ENCODE measurements at regions of chr17 and their contacts with region 1.

Region 1: DNA sequence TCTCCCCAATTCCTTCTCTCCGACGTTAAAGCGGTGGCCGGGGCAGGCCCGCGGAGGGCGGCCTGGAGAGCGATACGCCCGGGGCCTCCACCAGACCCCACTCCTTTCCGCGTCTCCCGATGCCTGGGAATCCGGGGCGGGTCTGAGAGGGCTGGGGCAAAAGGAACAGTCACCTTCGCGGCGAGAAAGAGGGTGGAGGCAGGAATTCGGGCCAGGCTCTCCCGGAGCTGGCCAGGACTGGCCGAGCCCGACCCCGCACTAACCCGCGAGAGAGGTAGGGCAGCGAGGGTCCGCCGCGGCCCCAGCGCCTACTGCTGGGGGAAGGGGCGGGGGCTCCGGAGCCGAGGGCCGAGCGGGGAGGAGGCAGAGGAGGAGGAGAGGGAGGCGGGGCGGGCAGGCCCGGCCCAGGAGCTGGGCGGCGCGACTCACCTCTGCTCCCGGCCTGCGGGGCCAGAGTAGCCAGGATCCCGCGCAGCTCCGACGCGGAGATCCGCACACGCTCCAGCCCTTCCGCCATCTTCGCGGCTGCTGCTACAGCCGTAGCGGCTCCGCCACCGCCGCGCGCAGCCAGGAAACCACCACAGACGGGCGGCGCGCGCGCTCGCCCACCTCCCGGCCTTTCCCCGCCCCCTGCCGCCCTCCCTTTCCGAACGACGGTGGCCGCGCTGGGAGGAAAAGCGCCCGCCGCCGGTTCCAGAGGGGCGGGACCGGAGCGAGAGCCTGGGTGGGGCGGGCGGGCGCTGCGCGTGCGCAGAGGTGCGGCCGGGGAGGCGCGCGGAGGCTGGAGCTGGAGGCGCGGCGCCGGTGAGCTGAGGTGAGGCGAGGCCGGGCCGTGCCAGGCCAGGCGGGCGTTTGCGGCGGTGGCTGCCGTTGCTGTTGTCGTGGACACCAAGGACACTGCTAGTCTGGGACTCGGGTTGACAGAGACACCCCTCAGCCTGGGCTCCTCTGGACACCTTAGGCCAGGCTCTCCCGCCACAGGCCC is at the starts of genes SMG6 and SRR:
- DNase-seq: peak; percentile 98
- ATAC-seq: peak; percentile 89
- H3K4me3 Mint-ChIP-seq: peak within 1 kb of the TSS; percentile 81
- H3K27ac Mint-ChIP-seq: peak within 1 kb of the TSS; percentile 61
- H3K4me1 Mint-ChIP-seq: peaks cover 46% of the 10 kb centered on the region
- H3K27me3 Mint-ChIP-seq: no peaks in the 10 kb centered on the region
- total RNA-seq, gene SMG6: 28.5 to 31.4 TPM
- total RNA-seq, gene SRR: 15.4 to 18.3 TPM

Region 2: DNA sequence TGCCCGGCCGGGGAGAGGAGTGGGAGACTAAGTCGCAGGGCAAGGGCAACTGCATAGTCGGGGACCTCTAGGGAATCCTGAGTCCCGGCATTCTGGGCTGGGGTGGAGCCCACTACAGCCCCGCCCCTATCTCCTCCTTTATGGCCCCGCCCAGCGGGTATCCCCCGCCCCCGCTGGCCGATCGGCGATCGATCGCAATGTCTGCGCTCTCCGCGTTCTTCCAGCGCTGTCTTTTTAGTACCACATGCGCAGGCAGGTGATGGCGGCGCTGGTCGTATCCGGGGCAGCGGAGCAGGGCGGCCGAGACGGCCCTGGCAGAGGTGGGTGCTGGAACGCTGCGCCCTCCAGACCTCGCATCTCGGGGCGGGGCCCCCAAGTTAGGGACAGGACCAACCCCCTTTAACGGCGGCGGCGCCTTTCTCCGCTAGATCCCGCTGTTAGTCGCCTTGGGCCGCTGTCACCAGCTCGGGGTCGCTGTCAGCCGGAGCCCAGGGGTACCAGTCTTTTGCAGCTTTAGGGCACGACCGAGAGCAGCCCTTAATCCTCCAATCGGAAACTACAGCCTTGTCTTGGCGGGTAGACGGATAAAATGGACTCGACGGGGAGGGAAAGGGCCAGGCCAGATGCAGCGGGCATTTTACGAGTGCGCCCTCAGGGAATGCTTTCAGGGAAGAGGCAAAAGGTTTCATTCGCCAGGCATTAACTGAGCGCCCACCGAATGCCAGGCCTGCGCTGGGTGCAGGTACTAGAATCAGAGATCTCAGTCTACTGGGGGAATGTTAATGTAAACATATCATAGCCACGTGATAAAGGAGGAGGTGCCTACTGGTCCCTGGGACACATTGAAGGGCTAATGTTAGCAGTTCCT is 273.4 kb before region 1 on chr17 and contains the start of gene DPH1:
- CTCF ChIA-PET with region 1: no interaction called
- POLR2A ChIA-PET with region 1: no interaction called
- intact Hi-C with region 1: loop called in 1 of 2 experiments (anchors 1 kb)
- DNase-seq: peak; percentile 94
- ATAC-seq: peak; percentile 91
- H3K4me3 Mint-ChIP-seq: peak within 1 kb of the TSS; percentile 88
- H3K27ac Mint-ChIP-seq: peak within 1 kb of the TSS; percentile 78
- H3K4me1 Mint-ChIP-seq: peaks cover 24% of the 10 kb centered on the region
- H3K27me3 Mint-ChIP-seq: peaks cover 20% of the 10 kb centered on the region
- total RNA-seq, gene DPH1: 29.1 to 37.0 TPM

Region 3: GRCh38 chr17:2049333-2050299 is 253.9 kb before region 1 on chr17:
- CTCF ChIA-PET with region 1: interaction called, 6 read pairs
- POLR2A ChIA-PET with region 1: no interaction called
- intact Hi-C with region 1: loop called in 1 of 2 experiments (anchors 1 kb)
- DNase-seq: peak; percentile 92
- ATAC-seq: peak; percentile 31
- H3K4me3 Mint-ChIP-seq: peak overlapping the region; percentile 72
- H3K27ac Mint-ChIP-seq: no peak overlapping the region
- H3K4me1 Mint-ChIP-seq: peaks cover 29% of the 10 kb centered on the region
- H3K27me3 Mint-ChIP-seq: peaks cover 11% of the 10 kb centered on the region

Region 4: GRCh38 chr17:2266045-2266864 is 37.2 kb before region 1 on chr17:
- CTCF ChIA-PET with region 1: interaction called, 3 read pairs
- POLR2A ChIA-PET with region 1: no interaction called
- intact Hi-C with region 1: loop called in 1 of 2 experiments (anchors 1 kb)
- DNase-seq: peak; percentile 93
- ATAC-seq: peak; percentile 76
- H3K4me3 Mint-ChIP-seq: peak overlapping the region; percentile 72
- H3K27ac Mint-ChIP-seq: peak overlapping the region; percentile 98
- H3K4me1 Mint-ChIP-seq: peaks cover 86% of the 10 kb centered on the region
- H3K27me3 Mint-ChIP-seq: no peaks in the 10 kb centered on the region

Region 5: GRCh38 chr17:2392252-2393173 is 89.0 kb after region 1 on chr17:
- CTCF ChIA-PET with region 1: no interaction called
- POLR2A ChIA-PET with region 1: interaction called, 3 read pairs
- intact Hi-C with region 1: loop called in 1 of 2 experiments (anchors 1 kb)
- DNase-seq: peak; percentile 99
- ATAC-seq: peak; percentile 72
- H3K4me3 Mint-ChIP-seq: peak overlapping the region; percentile 80
- H3K27ac Mint-ChIP-seq: peak overlapping the region; percentile 94
- H3K4me1 Mint-ChIP-seq: peaks cover 52% of the 10 kb centered on the region
- H3K27me3 Mint-ChIP-seq: no peaks in the 10 kb centered on the region

Region 6: GRCh38 chr17:2511462-2512369 is 208.2 kb after region 1 on chr17 and contains the start of gene METTL16:
- CTCF ChIA-PET with region 1: no interaction called
- POLR2A ChIA-PET with region 1: no interaction called
- intact Hi-C with region 1: loop called in 1 of 2 experiments (anchors 2 kb)
- DNase-seq: peak; percentile 100
- ATAC-seq: peak; percentile 99
- H3K4me3 Mint-ChIP-seq: no peak within 1 kb of the TSS
- H3K27ac Mint-ChIP-seq: no peak within 1 kb of the TSS
- H3K4me1 Mint-ChIP-seq: peaks cover 17% of the 10 kb centered on the region
- H3K27me3 Mint-ChIP-seq: no peaks in the 10 kb centered on the region
- total RNA-seq, gene METTL16: 50.1 to 61.6 TPM

Region 7: DNA sequence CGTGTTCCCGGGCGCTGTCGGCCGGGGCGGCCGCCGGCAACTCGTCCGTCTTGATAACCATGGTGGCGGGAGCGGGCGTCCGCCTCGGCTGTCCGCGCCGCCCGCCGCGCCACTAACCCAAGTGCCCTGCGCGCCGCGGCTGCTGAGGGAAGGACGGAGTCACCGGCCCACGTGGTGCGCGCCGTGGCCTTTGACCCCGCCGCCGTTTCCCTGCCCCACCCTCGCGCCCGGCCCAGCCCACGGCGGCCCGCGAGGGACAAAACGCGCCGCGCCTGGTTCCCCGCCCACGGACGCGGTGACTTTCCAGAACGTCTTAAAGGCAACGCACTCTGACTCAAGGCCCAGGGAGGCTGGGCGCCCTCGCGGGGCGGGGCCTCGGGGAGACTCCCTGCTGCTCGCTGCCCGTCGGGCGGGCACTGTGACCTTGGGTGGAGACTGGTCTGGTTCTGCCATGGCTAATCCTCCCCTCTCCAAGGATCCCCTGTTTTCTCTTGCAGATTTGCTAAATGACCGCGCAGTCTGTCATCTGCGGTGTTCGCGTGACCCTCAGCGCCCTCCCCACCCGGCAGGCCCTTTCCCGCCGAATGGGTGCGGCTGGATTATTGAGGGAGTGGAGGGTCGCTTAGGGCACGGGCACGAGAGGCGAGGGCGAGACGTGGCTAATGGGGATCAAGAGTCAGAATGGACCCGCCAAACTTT is 408.3 kb after region 1 on chr17 and contains the start of gene CLUH:
- CTCF ChIA-PET with region 1: no interaction called
- POLR2A ChIA-PET with region 1: no interaction called
- intact Hi-C with region 1: loop called in 1 of 2 experiments (anchors 1 kb)
- DNase-seq: peak; percentile 98
- ATAC-seq: peak; percentile 95
- H3K4me3 Mint-ChIP-seq: peak within 1 kb of the TSS; percentile 86
- H3K27ac Mint-ChIP-seq: peak within 1 kb of the TSS; percentile 84
- H3K4me1 Mint-ChIP-seq: peaks cover 35% of the 10 kb centered on the region
- H3K27me3 Mint-ChIP-seq: no peaks in the 10 kb centered on the region
- total RNA-seq, gene CLUH: 107 to 123 TPM

Measured in activated CD4-positive, alpha-beta T cell treated with anti-CD3 and anti-CD28 coated beads for 36 hours (primary cell).